BJ (cell line): ENCODE measurements at regions of chr18 and their contacts with region 1.

Region 1: GRCh38 chr18:42053188-42053781 is 98.3 kb downstream of the PIK3C3 start:
- DNase-seq: no peak
- H3K4me3 ChIP-seq: no peak overlapping the region
- H3K27me3 ChIP-seq: no peaks in the 10 kb centered on the region
- CTCF ChIP-seq: peak; percentile 85

Region 2: DNA sequence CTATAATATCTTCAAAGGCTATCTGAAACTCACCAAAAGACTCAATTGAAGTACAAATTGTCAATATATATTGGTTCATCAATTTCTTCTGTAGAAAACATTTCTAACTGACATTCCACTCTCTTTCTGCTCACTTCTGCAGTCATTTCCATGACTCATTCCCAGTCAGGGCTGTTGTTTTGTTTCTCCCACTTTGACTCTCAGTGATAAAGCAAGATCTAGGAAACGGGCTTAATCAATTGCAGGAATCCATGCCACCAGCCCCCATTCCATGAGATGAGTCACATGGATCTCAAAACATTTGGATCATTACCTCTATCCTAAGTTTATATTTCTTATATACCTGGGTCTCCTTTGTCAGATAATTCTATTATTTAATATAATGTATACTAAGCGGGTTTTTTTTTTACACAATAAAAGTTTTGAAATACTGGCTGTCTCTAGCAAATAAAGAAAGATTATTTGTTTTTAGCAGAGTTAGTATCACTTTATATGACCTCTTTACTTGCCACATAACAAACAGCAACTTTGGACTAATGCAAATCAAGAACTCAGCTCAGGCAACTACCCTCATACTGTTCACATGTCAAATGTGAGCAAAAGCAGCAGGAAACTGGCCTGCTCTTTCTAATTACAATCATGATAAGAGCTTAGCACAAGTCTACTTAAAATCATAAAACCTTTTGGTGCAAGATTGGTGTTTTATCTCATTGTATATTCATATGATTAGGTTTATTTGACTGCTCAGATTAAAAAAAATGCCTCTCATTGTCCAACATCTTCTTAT is 349.3 kb before region 1 on chr18:
- CTCF ChIA-PET with region 1: no interaction called
- POLR2A ChIA-PET with region 1: no interaction called
- DNase-seq: no peak
- H3K4me3 ChIP-seq: no peak overlapping the region
- H3K27me3 ChIP-seq: no peaks in the 10 kb centered on the region
- CTCF ChIP-seq: no peak

Region 3: GRCh38 chr18:41954827-41955613 is 98.3 kb before region 1 on chr18 and contains the start of gene PIK3C3:
- CTCF ChIA-PET with region 1: no interaction called
- POLR2A ChIA-PET with region 1: no interaction called
- DNase-seq: peak; percentile 89
- H3K4me3 ChIP-seq: peak within 1 kb of the TSS; percentile 90
- H3K27me3 ChIP-seq: no peaks in the 10 kb centered on the region
- CTCF ChIP-seq: no peak
- polyA plus RNA-seq, gene PIK3C3: 45.3 and 64.5 TPM in 2 replicates

Region 4: GRCh38 chr18:42028247-42028832 is 24.9 kb before region 1 on chr18:
- CTCF ChIA-PET with region 1: interaction called, 21 read pairs
- POLR2A ChIA-PET with region 1: interaction called, 3 read pairs
- DNase-seq: no peak
- H3K4me3 ChIP-seq: no peak overlapping the region
- H3K27me3 ChIP-seq: no peaks in the 10 kb centered on the region
- CTCF ChIP-seq: peak; percentile 90

Region 5: DNA sequence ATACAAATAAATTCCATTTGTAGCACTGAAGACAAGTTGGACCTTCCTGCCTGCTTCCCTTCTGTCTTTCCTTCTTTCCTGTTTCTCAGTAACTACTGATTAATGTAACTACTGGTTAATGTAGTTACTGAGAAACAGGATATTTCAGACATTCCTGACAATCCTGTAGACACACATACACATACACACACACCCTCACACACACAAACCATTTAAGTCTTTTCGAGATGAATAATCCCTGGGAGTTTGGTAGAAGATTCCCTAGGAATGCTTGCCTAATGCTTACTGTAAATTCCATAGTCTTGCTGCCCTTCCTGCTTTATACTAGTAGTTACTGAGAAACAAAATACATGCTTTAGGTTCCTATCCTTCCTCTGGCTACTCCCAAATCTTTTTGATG is 14.3 kb before region 1 on chr18:
- CTCF ChIA-PET with region 1: interaction called, 13 read pairs
- POLR2A ChIA-PET with region 1: no interaction called
- DNase-seq: peak; percentile 89
- H3K4me3 ChIP-seq: no peak overlapping the region
- H3K27me3 ChIP-seq: no peaks in the 10 kb centered on the region
- CTCF ChIP-seq: no peak

Region 6: DNA sequence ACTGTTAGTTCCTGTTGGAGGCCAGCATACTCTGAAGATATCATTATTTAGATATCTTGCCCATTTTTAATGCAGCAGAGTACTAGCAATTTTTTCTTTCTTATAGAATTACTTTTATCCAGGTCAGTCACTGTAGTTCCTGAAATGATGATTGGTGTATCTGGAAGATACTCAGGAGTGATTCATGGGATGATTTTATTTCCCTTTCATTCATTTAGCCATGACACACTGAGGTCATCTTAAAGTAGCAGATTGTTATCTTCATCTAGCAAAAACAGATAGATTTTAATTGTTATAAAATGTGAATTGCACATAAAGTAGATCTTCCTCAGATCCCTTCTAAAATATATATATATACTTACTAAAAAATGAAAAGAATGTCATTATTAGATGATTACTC is 10.8 kb after region 1 on chr18:
- CTCF ChIA-PET with region 1: interaction called, 25 read pairs
- POLR2A ChIA-PET with region 1: no interaction called
- DNase-seq: no peak
- H3K4me3 ChIP-seq: no peak overlapping the region
- H3K27me3 ChIP-seq: no peaks in the 10 kb centered on the region
- CTCF ChIP-seq: no peak

Region 7: GRCh38 chr18:42072407-42072806 is 19.1 kb after region 1 on chr18:
- CTCF ChIA-PET with region 1: interaction called, 11 read pairs
- POLR2A ChIA-PET with region 1: no interaction called
- DNase-seq: no peak
- H3K4me3 ChIP-seq: no peak overlapping the region
- H3K27me3 ChIP-seq: no peaks in the 10 kb centered on the region
- CTCF ChIP-seq: no peak

Region 8: DNA sequence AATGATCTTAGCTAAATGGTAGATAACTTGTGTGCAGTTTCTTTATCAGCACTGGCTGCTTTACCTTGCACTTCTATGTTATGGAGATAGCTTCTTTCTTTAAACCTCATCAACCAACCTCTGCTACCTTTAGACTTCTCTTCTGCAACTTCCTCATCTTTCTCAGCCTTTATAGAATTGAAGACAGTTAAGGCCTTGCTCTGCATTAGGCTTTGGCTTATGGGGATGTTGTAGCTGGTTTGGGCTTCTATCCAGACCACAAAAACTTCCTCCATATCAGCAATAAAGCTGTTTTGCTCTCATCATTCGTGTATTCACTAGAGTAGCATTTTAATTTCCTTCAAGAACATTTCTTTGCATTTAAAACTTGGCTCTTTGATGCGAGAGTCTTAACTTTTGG is 25.4 kb after region 1 on chr18:
- CTCF ChIA-PET with region 1: interaction called, 11 read pairs
- POLR2A ChIA-PET with region 1: no interaction called
- DNase-seq: no peak
- H3K4me3 ChIP-seq: no peak overlapping the region
- H3K27me3 ChIP-seq: no peaks in the 10 kb centered on the region
- CTCF ChIP-seq: no peak

Region 9: DNA sequence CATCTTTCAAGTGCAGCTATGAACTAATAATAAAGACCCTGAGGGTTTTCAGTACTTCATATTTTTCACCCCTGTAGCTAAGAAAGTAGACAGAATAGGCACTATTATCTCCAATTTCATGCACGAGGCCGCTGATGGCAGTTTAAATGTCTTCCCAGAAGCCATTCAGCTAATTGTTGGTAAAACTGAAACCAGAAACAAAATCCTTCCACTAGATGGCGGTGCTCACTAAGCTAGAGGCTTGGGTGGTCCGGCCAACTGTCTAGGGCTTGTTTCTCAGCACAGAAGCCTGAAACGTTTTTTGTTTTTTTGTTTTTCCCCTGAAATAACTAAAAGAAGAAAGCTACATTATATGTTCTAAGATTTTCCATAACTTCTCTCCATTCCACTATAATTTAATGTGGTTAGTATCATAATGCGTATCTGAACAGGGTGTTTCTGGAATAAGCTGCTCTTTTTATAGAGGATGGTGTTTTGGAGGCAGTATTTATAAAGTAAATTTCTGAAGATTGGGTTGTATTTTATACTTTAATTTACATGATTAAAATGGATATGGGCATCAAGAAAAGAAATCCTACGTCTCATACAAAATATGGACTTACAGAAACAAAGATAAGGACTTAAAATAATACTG is 61.1 kb after region 1 on chr18:
- CTCF ChIA-PET with region 1: interaction called, 16 read pairs
- POLR2A ChIA-PET with region 1: no interaction called
- DNase-seq: peak; percentile 12
- H3K4me3 ChIP-seq: no peak overlapping the region
- H3K27me3 ChIP-seq: no peaks in the 10 kb centered on the region
- CTCF ChIP-seq: peak; percentile 79

Region 10: GRCh38 chr18:42281124-42281523 is 227.8 kb after region 1 on chr18:
- CTCF ChIA-PET with region 1: no interaction called
- POLR2A ChIA-PET with region 1: no interaction called
- DNase-seq: no peak
- H3K4me3 ChIP-seq: no peak overlapping the region
- H3K27me3 ChIP-seq: no peaks in the 10 kb centered on the region
- CTCF ChIP-seq: no peak